Activated B cell treated with CpG ODN at 0.5 μM for 24 hours (primary cell): ENCODE measurements at regions of chr4 and their contacts with region 1.

Region 1: DNA sequence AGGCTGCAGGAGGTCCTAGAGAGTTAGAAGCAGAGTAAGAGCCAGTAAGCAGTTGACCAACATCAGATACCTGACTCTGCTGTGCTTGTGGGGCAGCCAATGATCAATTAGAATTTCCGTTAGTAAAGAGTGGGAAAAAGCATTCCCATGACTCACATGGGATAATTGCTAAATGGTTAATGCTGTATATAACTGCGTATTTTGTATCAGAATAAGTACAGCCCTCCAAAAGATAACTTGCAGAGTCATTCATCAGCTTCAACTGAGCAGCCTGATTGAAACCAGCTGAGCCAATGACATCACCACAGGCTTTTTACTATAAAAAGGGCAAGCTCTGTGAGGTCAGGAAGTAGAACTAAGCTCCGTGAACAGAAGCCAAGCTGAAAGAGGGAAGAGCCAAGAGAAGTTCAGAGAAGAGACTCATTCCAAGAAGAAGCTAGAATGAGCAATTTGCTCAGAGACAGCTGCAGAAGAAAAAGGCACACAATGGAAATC is 67.9 kb downstream of the PPP3CA start:
- DNase-seq: no peak
- ATAC-seq: peak; percentile 70
- H3K4me3 Mint-ChIP-seq: peak overlapping the region; percentile 64
- H3K27ac Mint-ChIP-seq: peak overlapping the region; percentile 86
- H3K4me1 Mint-ChIP-seq: peaks cover 82% of the 10 kb centered on the region
- H3K27me3 Mint-ChIP-seq: no peaks in the 10 kb centered on the region
- CTCF ChIP-seq: no peak

Region 2: GRCh38 chr4:101259876-101260275 is 19.5 kb before region 1 on chr4:
- CTCF ChIA-PET with region 1: interaction called, 4 read pairs
- POLR2A ChIA-PET with region 1: no interaction called
- intact Hi-C with region 1: loop called (anchors 2 kb)
- DNase-seq: no peak
- ATAC-seq: peak; percentile 40
- H3K4me3 Mint-ChIP-seq: peak overlapping the region; percentile 39
- H3K27ac Mint-ChIP-seq: peak overlapping the region; percentile 73
- H3K4me1 Mint-ChIP-seq: peaks cover 94% of the 10 kb centered on the region
- H3K27me3 Mint-ChIP-seq: no peaks in the 10 kb centered on the region
- CTCF ChIP-seq: no peak

Region 3: DNA sequence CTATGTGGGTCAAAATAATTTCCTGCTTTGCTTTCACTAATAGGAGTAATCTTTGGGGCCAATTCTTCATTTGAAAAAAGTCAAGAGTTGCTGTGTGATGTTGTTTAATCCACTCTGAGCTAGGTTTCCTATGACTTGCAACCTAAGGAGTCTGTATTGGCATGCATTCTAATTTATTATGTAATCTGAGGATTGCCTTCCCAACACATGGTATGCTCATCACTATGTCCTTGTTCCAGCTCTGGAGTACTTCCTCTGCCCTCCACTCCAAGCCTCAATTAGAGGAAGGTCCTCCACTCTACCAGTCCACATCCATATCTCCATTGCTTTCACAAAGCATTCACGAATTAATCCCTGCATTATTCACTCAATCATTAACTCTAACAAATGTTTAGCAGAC is 11.8 kb after region 1 on chr4:
- CTCF ChIA-PET with region 1: no interaction called
- POLR2A ChIA-PET with region 1: no interaction called
- intact Hi-C with region 1: loop called (anchors 2 kb)
- DNase-seq: no peak
- ATAC-seq: no peak
- H3K4me3 Mint-ChIP-seq: no peak overlapping the region
- H3K27ac Mint-ChIP-seq: peak overlapping the region; percentile 30
- H3K4me1 Mint-ChIP-seq: peaks cover 73% of the 10 kb centered on the region
- H3K27me3 Mint-ChIP-seq: no peaks in the 10 kb centered on the region
- CTCF ChIP-seq: no peak

Region 4: DNA sequence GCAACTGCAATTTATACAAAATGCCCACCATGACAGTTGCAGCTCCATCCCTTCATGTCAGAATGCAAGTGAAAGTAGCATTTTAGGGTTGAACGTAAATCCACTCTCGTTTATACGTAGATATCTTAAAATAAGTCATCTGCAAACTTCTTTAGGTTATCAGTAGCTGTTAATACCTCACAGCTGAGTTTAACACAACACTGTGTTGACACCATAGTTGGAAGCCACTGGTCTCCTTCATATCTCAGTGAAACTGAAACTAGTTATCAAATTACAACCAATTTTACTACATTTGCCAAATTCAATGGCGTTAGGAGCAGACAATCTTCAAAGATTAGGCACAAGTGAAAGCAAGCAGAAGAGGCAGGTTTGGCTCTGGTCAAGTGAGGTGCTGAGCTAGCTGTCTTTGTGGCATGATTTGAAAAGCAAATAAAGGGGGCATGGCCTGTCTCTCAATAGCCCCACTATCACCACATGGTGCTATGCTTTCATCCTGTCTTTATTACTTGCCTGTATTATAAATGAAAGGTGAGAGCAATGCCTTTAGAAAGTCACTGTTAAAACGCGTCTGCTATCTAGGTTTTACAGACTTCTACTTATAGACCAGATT is 55.6 kb after region 1 on chr4:
- CTCF ChIA-PET with region 1: no interaction called
- POLR2A ChIA-PET with region 1: interaction called, 10 read pairs
- intact Hi-C with region 1: no loop called
- DNase-seq: no peak
- ATAC-seq: peak; percentile 26
- H3K4me3 Mint-ChIP-seq: no peak overlapping the region
- H3K27ac Mint-ChIP-seq: peak overlapping the region; percentile 25
- H3K4me1 Mint-ChIP-seq: peaks cover 86% of the 10 kb centered on the region
- H3K27me3 Mint-ChIP-seq: no peaks in the 10 kb centered on the region
- CTCF ChIP-seq: no peak

Region 5: GRCh38 chr4:101584306-101584705 is 304.9 kb after region 1 on chr4:
- CTCF ChIA-PET with region 1: no interaction called
- POLR2A ChIA-PET with region 1: no interaction called
- intact Hi-C with region 1: no loop called
- DNase-seq: no peak
- ATAC-seq: no peak
- H3K4me3 Mint-ChIP-seq: no peak overlapping the region
- H3K27ac Mint-ChIP-seq: no peak overlapping the region
- H3K4me1 Mint-ChIP-seq: no peaks in the 10 kb centered on the region
- H3K27me3 Mint-ChIP-seq: no peaks in the 10 kb centered on the region
- CTCF ChIP-seq: no peak

Region 6: DNA sequence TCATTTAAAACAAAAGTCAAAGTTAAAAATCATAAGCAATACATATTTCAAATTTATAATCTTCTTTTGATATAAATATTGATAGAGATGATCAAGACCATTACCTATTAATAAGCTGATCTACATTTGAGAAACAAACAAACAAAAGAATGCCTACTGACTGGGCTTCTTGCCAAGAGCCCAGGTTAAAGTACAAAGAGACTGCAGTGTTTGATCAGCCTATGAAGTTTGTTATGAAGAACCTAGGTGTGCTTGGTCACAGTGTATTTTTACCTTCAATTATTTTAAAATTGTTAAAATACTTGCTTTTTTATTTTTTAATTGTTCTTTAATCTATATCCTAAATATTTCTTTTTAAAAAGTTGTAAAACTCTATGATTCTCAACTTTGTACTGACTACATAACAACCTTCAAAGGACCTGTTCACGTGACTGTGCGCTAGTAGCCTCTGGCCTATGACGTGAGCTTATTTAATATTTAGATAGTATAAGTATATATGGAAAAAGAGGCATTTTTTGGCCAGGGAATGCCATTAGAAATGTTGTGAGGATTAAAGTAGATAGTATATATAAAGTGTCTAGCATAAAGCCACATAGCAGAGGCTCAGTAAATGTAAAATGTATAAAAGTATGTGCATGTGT is 1077.3 kb after region 1 on chr4:
- CTCF ChIA-PET with region 1: no interaction called
- POLR2A ChIA-PET with region 1: no interaction called
- intact Hi-C with region 1: no loop called
- DNase-seq: no peak
- ATAC-seq: no peak
- H3K4me3 Mint-ChIP-seq: no peak overlapping the region
- H3K27ac Mint-ChIP-seq: no peak overlapping the region
- H3K4me1 Mint-ChIP-seq: no peaks in the 10 kb centered on the region
- H3K27me3 Mint-ChIP-seq: no peaks in the 10 kb centered on the region
- CTCF ChIP-seq: no peak